AG04450 (cell line): ENCODE measurements at regions of chr10 and their contacts with region 1.

Region 1: GRCh38 chr10:69728335-69728870 is 73.3 kb upstream of the COL13A1 start:
- DNase-seq: no peak
- H3K4me3 ChIP-seq: no peak overlapping the region
- H3K27ac ChIP-seq: no peak overlapping the region
- H3K27me3 ChIP-seq: peaks cover 11% of the 10 kb centered on the region
- CTCF ChIP-seq: no peak

Region 2: DNA sequence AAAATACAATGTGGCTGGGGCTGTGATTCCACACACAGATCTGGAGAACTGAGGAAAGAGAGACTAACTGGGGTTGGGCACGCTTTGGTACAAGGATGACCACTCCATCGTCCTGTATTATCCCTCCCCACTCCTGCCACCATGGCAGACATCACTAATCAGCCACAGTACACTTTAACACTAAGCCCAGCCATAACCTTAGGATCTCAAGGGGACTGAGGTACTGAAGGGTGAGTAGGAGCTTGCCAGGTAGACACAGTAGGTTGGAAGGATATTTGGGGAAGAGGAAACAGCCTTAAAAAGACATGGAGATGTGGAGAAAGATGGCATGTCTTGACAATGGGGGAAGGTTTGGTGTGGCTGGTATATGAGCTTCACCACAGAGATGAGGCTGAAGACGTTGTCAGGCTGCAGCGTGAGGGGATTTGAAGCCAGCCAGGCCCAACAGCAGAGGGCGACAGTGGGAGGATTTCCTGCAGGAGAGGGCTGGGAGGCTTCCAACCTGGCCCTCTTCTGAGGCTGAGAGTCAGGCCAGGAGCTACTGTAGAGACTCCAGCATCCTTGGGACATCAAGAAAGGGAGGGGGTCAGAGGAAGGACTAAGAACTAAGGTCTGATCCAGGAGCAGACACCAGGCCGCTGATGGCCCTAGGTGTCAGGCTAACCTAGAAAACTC is 14.7 kb after region 1 on chr10:
- CTCF ChIA-PET with region 1: interaction called, 13 read pairs
- POLR2A ChIA-PET with region 1: interaction called, 4 read pairs
- DNase-seq: no peak
- H3K4me3 ChIP-seq: no peak overlapping the region
- H3K27ac ChIP-seq: no peak overlapping the region
- H3K27me3 ChIP-seq: no peaks in the 10 kb centered on the region
- CTCF ChIP-seq: peak; percentile 64

Region 3: GRCh38 chr10:69749178-69750010 is 21.0 kb after region 1 on chr10:
- CTCF ChIA-PET with region 1: interaction called, 13 read pairs
- POLR2A ChIA-PET with region 1: interaction called, 10 read pairs
- DNase-seq: no peak
- H3K4me3 ChIP-seq: no peak overlapping the region
- H3K27ac ChIP-seq: no peak overlapping the region
- H3K27me3 ChIP-seq: no peaks in the 10 kb centered on the region
- CTCF ChIP-seq: no peak

Region 4: GRCh38 chr10:69760072-69760471 is 31.7 kb after region 1 on chr10:
- CTCF ChIA-PET with region 1: interaction called, 3 read pairs
- POLR2A ChIA-PET with region 1: interaction called, 11 read pairs
- DNase-seq: peak; percentile 68
- H3K4me3 ChIP-seq: no peak overlapping the region
- H3K27ac ChIP-seq: peak overlapping the region; percentile 61
- H3K27me3 ChIP-seq: peaks cover 4% of the 10 kb centered on the region
- CTCF ChIP-seq: no peak